ENCODE measurements at regions of chr12 and their contacts with region 1.

Region 1: DNA sequence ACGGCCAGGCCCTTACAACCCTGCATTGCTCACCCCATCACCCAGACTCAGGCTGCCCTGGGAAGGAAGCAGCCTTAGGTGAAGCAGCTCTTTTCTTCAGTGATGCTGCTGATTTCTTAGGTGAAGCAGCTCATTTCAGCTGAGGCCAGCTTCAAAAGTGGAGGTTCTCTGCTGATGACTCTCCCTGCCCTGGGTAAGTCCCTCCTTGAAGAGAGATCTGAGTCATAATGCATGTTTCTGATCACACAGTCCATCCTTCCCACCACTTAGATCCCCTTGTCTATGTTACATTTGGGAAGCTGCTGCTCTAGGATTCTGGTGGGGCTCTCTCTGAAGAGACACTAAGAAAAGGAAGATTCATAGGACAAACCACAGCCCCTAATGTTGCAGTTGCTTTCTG is 17.2 kb upstream of the ZNF140 start:
- H3K4me3 Mint-ChIP-seq: no peak overlapping the region
- H3K27ac Mint-ChIP-seq: no peak overlapping the region
- H3K4me1 Mint-ChIP-seq: no peaks in the 10 kb centered on the region
- H3K27me3 Mint-ChIP-seq: no peaks in the 10 kb centered on the region

Region 2: GRCh38 chr12:133010657-133011297 is 52.8 kb before region 1 on chr12:
- intact Hi-C with region 1: loop called (anchors 10 kb)
- H3K4me3 Mint-ChIP-seq: no peak overlapping the region
- H3K27ac Mint-ChIP-seq: no peak overlapping the region
- H3K4me1 Mint-ChIP-seq: no peaks in the 10 kb centered on the region
- H3K27me3 Mint-ChIP-seq: no peaks in the 10 kb centered on the region

Measured in dendritic cell treated with granulocyte-macrophage colony-stimulating factor and Interleukin-4, amounts not matched to agents 40 ng/mL and 50 ng/mL, for 4 days (primary cell).